ENCODE measurements at regions of chr14 and their contacts with region 1.

Region 1: DNA sequence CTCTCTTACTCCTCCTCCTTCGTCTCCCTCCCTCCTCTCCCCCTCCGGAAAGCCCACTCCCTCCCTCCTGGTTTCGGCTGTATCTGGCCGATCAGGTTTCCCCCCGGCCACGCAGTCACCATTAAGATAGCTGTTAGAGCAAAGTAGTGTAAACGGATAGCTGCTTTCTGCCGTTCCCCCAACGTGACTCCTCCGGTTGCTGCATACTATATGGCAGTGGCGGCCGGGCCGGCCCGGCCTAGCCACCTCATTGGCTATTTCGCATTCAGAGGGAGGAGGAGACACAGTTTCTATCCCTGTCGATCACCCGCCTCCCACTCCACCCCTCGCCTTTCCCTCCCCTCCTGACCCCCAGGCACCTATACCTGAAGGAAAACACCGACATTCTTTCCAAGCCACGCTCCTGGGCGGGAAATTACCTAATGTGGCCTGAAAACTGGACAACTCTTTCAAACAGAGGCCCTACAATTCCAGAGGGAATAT is at the start of gene SIX4:
- DNase-seq: peak; percentile 84
- ATAC-seq: peak; percentile 73
- H3K4me3 ChIP-seq: peak within 1 kb of the TSS; percentile 77 to 96 (median 84)
- H3K27ac ChIP-seq: peak within 1 kb of the TSS; percentile 85
- H3K4me1 ChIP-seq: peaks cover 25% of the 10 kb centered on the region
- H3K27me3 ChIP-seq: no peaks in the 10 kb centered on the region
- CTCF ChIP-seq: no peak
- EP300 ChIP-seq: 0 out of 4 replicates have a peak, but pooled peaks of 1 of the 2 experiments have one; percentile 12
- POLR2A ChIP-seq: peak; percentile 80
- RAD21 ChIP-seq: no peak
- total RNA-seq, gene SIX4: 6.0 and 6.7 TPM in 2 replicates

Region 2: GRCh38 chr14:59964251-59965007 is 759.7 kb before region 1 on chr14:
- CTCF ChIA-PET with region 1: no interaction called
- POLR2A ChIA-PET with region 1: no interaction called
- in situ Hi-C with region 1: no loop called
- intact Hi-C with region 1: no loop called
- DNase-seq: no peak
- ATAC-seq: peak; percentile 41
- H3K4me3 ChIP-seq: no peak overlapping the region
- H3K27ac ChIP-seq: no peak overlapping the region
- H3K4me1 ChIP-seq: no peaks in the 10 kb centered on the region
- H3K27me3 ChIP-seq: no peaks in the 10 kb centered on the region
- CTCF ChIP-seq: no peak
- EP300 ChIP-seq: no peak
- POLR2A ChIP-seq: no peak
- RAD21 ChIP-seq: no peak

Region 3: DNA sequence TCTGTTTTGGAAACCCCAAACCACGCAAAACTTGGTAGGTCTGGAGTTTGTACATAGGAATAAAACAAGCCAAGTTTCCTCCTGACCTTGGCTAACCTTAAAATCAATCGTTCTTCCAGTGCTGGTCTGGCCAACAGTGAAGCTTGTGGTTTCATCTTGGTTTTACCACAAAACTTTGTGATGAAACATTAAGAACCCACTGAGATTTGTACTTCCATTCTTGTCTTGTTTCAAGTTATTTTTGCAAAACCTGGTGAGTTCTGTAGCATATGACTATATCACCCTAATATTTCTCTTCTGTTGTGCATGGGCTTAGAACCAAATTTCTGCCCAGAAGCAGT is 101.3 kb before region 1 on chr14:
- CTCF ChIA-PET with region 1: no interaction called
- POLR2A ChIA-PET with region 1: no interaction called
- in situ Hi-C with region 1: no loop called
- intact Hi-C with region 1: loop called (anchors 1 kb)
- DNase-seq: no peak
- ATAC-seq: no peak
- H3K4me3 ChIP-seq: no peak overlapping the region
- H3K27ac ChIP-seq: no peak overlapping the region
- H3K4me1 ChIP-seq: peaks cover 39% of the 10 kb centered on the region
- H3K27me3 ChIP-seq: no peaks in the 10 kb centered on the region; a peak in 1 of 5 replicates
- CTCF ChIP-seq: no peak
- EP300 ChIP-seq: no peak
- POLR2A ChIP-seq: no peak
- RAD21 ChIP-seq: no peak

Region 4: DNA sequence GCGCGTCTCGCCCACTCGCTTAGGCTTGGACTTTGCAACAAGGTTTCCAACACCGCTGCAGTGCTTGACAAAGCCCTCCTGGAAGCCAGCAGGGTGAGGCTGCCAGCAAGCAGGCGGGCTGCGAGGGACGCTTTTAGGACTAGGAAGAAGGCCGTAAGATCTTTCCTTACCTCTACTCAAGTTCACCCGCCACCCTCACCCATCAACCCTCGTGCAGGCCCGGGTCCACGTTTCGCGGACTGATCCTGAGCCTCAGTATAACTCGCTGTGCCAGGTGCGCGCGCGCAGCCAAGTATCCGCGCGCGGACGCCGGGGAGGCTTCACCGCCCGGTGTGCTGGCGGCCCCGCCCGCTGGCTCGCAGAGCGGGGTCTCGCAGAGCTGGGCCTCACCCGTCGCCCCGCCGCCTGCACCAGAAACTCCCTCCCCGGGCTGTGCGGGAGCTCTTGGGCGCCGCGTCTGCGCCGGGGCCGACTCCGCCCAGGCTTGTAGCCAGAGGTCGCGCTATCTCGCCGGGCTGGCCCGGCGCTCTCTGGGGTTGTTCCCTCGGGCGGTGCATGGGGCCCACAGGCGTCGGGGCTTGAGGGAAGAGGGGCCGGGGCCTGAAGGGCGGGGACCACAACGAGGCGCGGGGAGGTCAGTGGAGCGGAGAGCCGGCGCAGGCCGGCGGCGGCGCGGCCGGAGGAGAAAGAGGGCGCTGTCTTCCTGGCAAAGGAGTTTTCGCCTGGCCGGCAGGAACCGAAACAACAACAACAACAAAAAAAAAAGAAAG is 67.3 kb before region 1 on chr14:
- CTCF ChIA-PET with region 1: no interaction called
- POLR2A ChIA-PET with region 1: interaction called, 20 read pairs
- in situ Hi-C with region 1: loop called (anchors 5 kb)
- intact Hi-C with region 1: loop called (anchors 2 kb)
- DNase-seq: peak; percentile 58
- ATAC-seq: peak; percentile 91
- H3K4me3 ChIP-seq: peak overlapping the region; percentile 57 to 75 (median 65)
- H3K27ac ChIP-seq: peak overlapping the region; percentile 11
- H3K4me1 ChIP-seq: peaks cover 56% of the 10 kb centered on the region
- H3K27me3 ChIP-seq: peaks cover 1 to 28% of the 10 kb centered on the region in 2 experiments; a peak in 4 of 5 replicates
- CTCF ChIP-seq: peak; percentile 72; the same call in 1 of the 2 replicates
- EP300 ChIP-seq: peak in 1 of 2 experiments; percentile 11; a peak in 1 of 4 replicates
- POLR2A ChIP-seq: peak in 1 of 2 experiments; percentile 52; a peak in 1 of 4 replicates
- RAD21 ChIP-seq: 0 out of 2 replicates have a peak, but pooled peaks have one; percentile 22

Region 5: DNA sequence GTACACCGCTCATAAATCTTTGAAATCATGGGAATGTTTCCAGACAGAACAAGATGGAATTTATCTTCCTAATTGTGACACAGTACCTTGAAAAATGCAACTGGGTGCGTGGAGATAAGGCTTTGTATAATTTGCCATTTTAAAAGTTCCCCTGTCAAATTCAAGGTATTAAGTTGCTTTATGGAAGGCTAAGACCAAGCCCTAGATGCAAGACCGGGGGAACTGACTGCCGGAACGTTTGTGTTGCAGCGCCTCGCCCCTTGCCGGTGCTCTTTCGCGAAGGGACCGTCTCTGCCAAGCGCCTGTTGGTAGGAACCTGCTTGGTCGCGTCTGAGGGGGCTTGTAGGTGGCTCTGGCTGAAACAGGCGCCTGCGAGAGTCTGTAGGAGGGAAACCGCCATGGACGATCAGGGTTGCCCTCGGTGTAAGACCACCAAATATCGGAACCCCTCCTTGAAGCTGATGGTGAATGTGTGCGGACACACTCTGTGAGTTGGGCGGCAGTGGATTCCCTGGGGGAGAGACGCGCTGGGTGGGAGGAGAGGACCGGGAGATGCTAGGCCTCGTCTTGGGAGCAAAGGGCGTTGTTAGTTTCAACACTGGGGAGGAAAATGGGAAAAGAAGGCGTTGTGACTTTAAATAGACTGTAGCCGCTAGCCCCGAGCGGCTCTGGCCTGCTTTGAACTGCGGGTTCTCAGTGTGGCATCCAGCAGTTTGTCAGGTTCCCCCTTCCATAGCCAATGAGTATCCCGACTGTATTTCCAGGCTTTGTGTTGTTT is 10.5 kb after region 1 on chr14 and contains the start of gene MNAT1:
- CTCF ChIA-PET with region 1: no interaction called
- POLR2A ChIA-PET with region 1: interaction called, 11 read pairs
- in situ Hi-C with region 1: no loop called
- intact Hi-C with region 1: loop called (anchors 1 kb)
- DNase-seq: peak; percentile 66
- ATAC-seq: peak; percentile 98
- H3K4me3 ChIP-seq: peak within 1 kb of the TSS; percentile 86 to 97 (median 95)
- H3K27ac ChIP-seq: peak within 1 kb of the TSS; percentile 84
- H3K4me1 ChIP-seq: peaks cover 22% of the 10 kb centered on the region
- H3K27me3 ChIP-seq: no peaks in the 10 kb centered on the region; a peak in 1 of 5 replicates
- CTCF ChIP-seq: peak; percentile 42
- EP300 ChIP-seq: no peak; a peak in 1 of 4 replicates
- POLR2A ChIP-seq: peak; percentile 84 to 87
- RAD21 ChIP-seq: peak; percentile 39
- total RNA-seq, gene MNAT1: 94.8 and 130 TPM in 2 replicates

Region 6: DNA sequence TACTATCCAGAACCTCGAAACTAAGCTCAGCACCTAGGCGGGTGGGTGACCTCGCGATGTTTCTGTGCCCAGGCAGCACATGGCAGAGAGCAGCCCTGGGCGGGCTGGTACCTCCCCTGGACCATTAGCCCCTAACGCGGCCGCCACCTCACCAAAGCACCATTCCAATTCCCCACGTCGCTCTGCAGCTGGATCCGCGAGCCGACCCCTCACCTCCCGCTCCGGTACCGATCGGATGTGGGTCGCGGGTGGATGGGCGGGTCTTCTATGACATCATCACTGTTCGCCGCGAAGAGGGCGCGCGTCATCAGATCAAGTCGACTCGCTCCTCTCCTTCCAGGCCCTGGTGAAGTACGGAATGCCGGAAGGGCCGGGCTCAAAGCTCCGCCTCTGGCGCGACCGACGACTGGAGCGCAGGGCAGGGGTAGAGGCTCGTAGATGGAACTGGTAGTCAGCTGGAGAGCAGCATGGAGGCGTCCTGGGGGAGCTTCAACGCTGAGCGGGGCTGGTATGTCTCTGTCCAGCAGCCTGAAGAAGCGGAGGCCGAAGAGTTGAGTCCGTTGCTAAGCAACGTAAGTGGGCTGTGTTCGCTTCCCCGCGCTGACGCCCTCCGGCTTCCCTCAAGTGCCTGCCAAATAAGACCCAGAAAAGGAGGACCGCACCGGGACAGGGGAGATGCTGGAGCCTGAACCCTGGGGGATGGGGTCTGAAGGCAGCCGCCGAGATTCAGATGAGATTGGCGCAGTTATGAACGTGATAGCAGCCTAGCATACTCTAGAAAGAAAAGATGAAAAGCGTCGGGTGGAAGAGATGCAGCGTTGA is 256.8 kb after region 1 on chr14 and contains the starts of genes SLC38A6 and TRMT5:
- CTCF ChIA-PET with region 1: no interaction called
- POLR2A ChIA-PET with region 1: interaction called, 6 read pairs
- in situ Hi-C with region 1: no loop called
- intact Hi-C with region 1: loop called (anchors 2 kb)
- DNase-seq: peak; percentile 91
- ATAC-seq: peak; percentile 97
- H3K4me3 ChIP-seq: peak within 1 kb of the TSS; percentile 62 to 93 (median 90)
- H3K27ac ChIP-seq: peak within 1 kb of the TSS; percentile 82
- H3K4me1 ChIP-seq: peaks cover 44% of the 10 kb centered on the region
- H3K27me3 ChIP-seq: no peaks in the 10 kb centered on the region; a peak in 1 of 5 replicates
- CTCF ChIP-seq: 0 out of 2 replicates have a peak, but pooled peaks have one; percentile 13
- EP300 ChIP-seq: peak; percentile 16 to 43; a peak in 2 of 4 replicates
- POLR2A ChIP-seq: peak; percentile 71 to 90
- RAD21 ChIP-seq: peak; percentile 19; the same call in 1 of the 2 replicates
- total RNA-seq, gene SLC38A6: 12.4 and 22.1 TPM in 2 replicates
- total RNA-seq, gene TRMT5: 16.0 and 26.0 TPM in 2 replicates

Region 7: DNA sequence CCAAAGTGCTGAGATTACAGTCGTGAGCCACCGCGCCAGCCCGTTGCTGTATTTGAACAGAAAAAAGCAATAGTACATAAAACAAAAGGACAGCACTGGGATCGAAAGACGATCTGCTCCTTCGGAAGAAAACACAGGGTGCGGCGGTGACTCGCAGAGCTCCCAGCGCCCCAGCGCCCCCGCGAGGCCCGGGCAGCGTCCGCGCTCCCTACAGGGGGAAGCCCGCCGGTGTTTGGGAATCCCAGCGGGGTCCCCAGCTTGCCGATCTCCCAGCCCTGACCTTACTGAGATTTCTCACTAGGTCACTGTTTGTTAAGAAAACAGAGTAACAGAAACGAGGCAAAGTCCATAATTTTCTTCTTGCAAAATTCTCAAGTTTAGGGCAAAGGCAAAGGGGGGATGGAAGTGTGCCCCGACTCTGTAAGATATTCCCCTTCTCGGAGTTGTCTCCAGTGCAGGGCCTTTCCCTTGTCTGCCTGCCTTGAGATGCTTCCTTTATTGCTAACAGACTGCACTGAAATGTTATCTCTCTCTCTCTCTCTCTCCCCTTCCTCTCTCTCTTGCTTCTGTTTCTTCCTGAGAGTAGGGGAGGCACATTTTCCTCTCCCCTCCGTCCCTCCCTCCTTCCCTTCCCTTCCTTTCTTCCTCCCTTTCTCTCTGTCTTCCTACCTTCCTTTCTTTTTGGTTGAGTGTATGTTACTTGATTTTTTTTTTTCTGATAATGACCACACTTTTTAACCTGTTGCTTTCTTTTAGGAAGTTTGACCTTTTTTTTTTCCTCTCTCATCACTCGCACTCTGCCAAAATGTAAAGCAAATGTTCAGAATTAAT is 465.0 kb after region 1 on chr14:
- CTCF ChIA-PET with region 1: no interaction called
- POLR2A ChIA-PET with region 1: no interaction called
- in situ Hi-C with region 1: no loop called
- intact Hi-C with region 1: loop called (anchors 10 kb)
- DNase-seq: peak; percentile 48
- ATAC-seq: peak; percentile 98
- H3K4me3 ChIP-seq: peak overlapping the region; percentile 49 to 72 (median 52); a peak in 5 of 6 replicates
- H3K27ac ChIP-seq: no peak overlapping the region
- H3K4me1 ChIP-seq: peaks cover 32% of the 10 kb centered on the region
- H3K27me3 ChIP-seq: peaks cover 0 to 4% of the 10 kb centered on the region in 2 experiments; a peak in 2 of 5 replicates
- CTCF ChIP-seq: peak; percentile 83
- EP300 ChIP-seq: no peak
- POLR2A ChIP-seq: no peak
- RAD21 ChIP-seq: peak; percentile 78